Ascending aorta (tissue), 2 donors: ENCODE measurements at regions of chr12 and their contacts with region 1.

Region 1: GRCh38 chr12:108691175-108691997 is 39.9 kb downstream of the CORO1C start:
- DNase-seq: peak; percentile 93 to 98
- H3K4me3 ChIP-seq: peak overlapping the region; percentile 38 to 50
- H3K27ac ChIP-seq: peak overlapping the region; percentile 95 to 97
- H3K4me1 ChIP-seq: peaks cover 23 to 66% of the 10 kb centered on the region in 2 donors
- H3K27me3 ChIP-seq: no peaks in the 10 kb centered on the region
- CTCF ChIP-seq: peak; percentile 26 to 56 (median 42)

Region 2: DNA sequence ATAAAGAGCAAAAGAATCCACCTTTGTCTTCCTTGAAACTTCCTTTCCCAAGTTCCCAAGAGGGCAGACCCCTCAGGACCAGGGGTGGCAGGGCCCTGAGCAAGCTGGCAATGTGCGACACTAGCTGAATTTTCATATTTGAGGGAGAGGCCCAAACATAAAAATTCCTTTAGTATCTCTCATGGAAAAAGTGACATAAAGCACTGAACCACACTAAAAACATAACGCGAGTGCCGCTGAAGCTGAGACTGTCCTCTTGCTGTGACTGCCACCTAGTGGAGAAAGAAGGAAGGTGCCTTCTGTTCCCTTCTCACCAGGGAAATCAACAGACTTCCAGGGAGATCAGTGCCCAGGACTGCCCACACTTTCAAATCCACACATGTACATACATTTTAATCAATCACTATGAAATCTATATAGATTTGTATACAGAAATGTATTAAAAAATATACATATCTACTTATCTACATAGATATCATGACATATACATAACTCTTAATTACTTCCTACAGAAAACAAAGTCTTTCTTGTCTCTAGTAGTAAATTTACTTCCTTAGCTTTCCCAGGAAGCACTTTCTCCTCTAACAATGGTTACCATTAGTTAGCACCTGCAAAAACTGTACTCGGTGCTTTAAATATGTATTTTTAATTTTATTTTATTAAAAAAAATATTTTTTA is 112.2 kb after region 1 on chr12:
- intact Hi-C with region 1: no loop called
- DNase-seq: peak in 1 of 2 donors; percentile 94
- H3K4me3 ChIP-seq: no peak overlapping the region
- H3K27ac ChIP-seq: peak overlapping the region; percentile 92 to 95
- H3K4me1 ChIP-seq: peaks cover 20 to 47% of the 10 kb centered on the region in 2 donors
- H3K27me3 ChIP-seq: no peaks in the 10 kb centered on the region
- CTCF ChIP-seq: peak; percentile 94 to 95 (median 94)

Region 3: DNA sequence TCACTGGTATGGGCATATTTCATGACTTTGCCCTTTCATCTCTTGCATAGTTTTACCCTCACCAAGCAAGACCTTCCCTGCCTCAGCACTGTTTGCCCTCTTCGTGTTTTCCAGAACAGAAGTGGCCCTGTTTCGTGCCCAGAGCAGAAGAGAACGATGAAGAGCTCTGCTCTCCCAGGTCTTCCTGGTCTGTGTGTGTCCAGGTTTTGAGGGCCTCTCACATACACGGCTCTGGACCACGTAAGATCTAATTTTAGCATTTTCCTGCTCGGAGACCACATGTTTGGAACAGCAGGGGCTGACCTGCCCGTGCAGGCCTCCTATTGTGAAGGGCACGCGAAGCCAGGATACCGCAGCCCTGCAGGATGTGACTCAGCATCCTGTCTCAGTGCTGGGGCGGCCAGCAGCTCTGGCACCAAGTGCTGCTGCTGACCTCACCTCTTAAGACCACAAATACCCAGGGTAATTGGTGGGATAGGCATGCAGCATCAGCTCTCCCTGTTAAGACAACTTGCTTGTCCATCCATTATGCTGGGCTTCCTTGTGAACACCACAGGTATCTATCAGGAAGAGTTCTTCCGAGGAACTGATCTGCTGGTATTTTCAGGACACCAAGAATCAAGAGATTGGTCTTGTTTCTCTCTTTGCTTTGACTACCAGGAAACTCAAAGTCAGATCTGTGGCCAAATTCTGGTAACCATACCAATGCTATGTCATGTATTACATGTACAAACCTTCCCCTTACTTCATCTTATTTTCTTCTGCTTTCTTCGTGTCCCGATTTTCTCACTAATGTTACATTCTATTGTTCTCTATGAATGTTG is 147.0 kb after region 1 on chr12:
- intact Hi-C with region 1: loop called (anchors 5 kb)
- DNase-seq: peak; percentile 95 to 98
- H3K4me3 ChIP-seq: no peak overlapping the region
- H3K27ac ChIP-seq: peak overlapping the region; percentile 96 to 97
- H3K4me1 ChIP-seq: peaks cover 40 to 62% of the 10 kb centered on the region in 2 donors
- H3K27me3 ChIP-seq: no peaks in the 10 kb centered on the region
- CTCF ChIP-seq: no peak